ENCODE measurements at regions of chr14 and their contacts with region 1.

Region 1: DNA sequence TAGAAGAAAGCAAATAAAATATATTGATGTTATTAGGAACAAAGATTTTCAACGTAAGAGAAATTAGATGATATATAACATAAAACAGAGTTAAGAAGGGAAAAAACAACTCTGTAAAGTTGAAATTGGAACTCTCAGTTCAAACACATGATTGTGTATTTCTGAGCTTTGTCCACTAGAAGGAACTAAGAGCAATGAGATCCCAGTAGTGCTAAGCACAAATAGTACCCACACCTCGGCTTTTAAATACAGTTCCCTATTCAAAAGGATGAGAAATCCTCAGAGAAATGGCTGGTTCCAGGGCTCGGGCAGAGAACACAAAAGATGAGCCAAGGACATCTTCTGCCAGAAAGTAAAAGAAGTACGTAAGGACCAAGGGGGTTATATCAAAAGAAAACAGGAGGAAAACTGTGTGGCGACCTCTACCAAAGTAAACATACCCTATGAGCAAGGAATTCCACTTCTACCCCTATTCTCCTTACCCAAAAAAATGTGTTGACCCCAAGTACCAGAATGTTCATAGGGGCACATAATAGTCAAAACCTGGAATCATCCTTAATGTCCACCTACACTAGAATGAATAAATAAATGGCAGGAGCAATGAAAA is 96.6 kb downstream of the SPTSSA start:
- DNase-seq: no peak
- ATAC-seq: peak; percentile 62
- H3K4me3 ChIP-seq: no peak overlapping the region
- H3K27ac ChIP-seq: no peak overlapping the region
- H3K4me1 ChIP-seq: no peaks in the 10 kb centered on the region
- H3K27me3 ChIP-seq: no peaks in the 10 kb centered on the region
- CTCF ChIP-seq: peak in 2 of 3 experiments; percentile 1 to 24; a peak in 1 of 6 replicates
- POLR2A ChIP-seq: no peak
- RAD21 ChIP-seq: peak; percentile 38

Region 2: DNA sequence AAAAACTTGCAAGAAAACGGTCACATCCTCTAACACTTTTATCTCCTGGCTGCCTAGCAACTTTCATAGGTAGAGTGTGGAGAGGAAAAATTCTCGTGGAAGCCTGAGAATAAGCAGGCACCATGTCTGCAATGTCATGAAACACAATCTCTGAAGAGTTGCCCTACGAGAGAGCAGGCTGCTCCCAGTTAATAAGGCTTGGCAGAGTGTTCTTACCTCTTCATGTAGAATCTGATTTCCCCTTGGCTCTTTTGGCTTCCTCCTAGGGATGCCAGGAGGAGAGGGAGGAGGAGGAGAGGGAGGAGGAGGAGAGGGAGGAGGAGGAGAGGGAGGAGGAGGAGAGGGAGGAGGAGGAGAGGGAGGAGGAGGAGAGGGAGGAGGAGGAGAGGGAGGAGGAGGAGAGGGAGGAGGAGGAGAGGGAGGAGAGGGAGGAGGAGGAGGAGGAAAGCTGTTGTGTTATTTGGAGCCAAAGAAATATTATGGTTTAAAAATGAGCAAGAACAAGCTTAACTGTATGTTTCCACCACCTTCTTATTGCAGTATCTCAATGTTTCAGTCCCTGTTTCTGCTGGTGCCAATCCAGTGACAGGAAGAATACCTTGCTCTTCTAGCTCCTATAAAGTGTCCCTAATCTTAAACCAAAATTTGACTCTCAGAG is 467.4 kb before region 1 on chr14:
- CTCF ChIA-PET with region 1: no interaction called
- POLR2A ChIA-PET with region 1: no interaction called
- RAD21 ChIA-PET with region 1: no interaction called
- intact Hi-C with region 1: no loop called
- DNase-seq: no peak
- ATAC-seq: no peak
- H3K4me3 ChIP-seq: no peak overlapping the region
- H3K27ac ChIP-seq: no peak overlapping the region
- H3K4me1 ChIP-seq: no peaks in the 10 kb centered on the region
- H3K27me3 ChIP-seq: no peaks in the 10 kb centered on the region
- CTCF ChIP-seq: no peak
- POLR2A ChIP-seq: no peak
- RAD21 ChIP-seq: no peak

Region 3: GRCh38 chr14:34387974-34388516 is 22.6 kb after region 1 on chr14:
- CTCF ChIA-PET with region 1: no interaction called
- POLR2A ChIA-PET with region 1: no interaction called
- RAD21 ChIA-PET with region 1: no interaction called
- intact Hi-C with region 1: loop called (anchors 1 kb)
- DNase-seq: no peak
- ATAC-seq: no peak
- H3K4me3 ChIP-seq: no peak overlapping the region
- H3K27ac ChIP-seq: no peak overlapping the region
- H3K4me1 ChIP-seq: 0 out of 4 replicates have a peak, but pooled peaks cover 2 to 4% of the 10 kb centered on the region in 2 experiments
- H3K27me3 ChIP-seq: no peaks in the 10 kb centered on the region
- CTCF ChIP-seq: no peak
- POLR2A ChIP-seq: no peak
- RAD21 ChIP-seq: no peak

Region 4: DNA sequence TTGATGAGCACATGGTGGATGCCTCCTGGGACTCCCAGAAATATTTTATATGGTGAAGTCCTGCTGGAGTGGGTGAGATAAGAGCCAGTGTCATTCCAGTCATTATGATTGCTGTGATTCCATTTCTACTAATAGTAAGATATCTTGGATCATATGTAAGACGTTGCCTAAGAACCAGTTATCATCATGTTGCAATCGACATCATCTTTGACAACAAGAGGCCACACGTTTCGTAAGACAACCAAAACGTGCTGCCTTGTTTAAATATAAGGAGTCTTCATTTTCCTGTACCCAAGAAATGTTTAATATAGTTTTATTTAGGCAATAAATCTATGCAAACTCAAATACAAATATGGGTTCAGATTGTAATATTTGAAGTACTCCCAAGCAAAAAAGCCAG is 38.2 kb after region 1 on chr14:
- CTCF ChIA-PET with region 1: no interaction called
- POLR2A ChIA-PET with region 1: no interaction called
- RAD21 ChIA-PET with region 1: no interaction called
- intact Hi-C with region 1: no loop called
- DNase-seq: no peak
- ATAC-seq: no peak
- H3K4me3 ChIP-seq: no peak overlapping the region
- H3K27ac ChIP-seq: no peak overlapping the region
- H3K4me1 ChIP-seq: no peaks in the 10 kb centered on the region
- H3K27me3 ChIP-seq: no peaks in the 10 kb centered on the region
- CTCF ChIP-seq: no peak
- POLR2A ChIP-seq: no peak
- RAD21 ChIP-seq: no peak

Measured in HCT116 (cell line).